MCF 10A (cell line): ENCODE measurements at regions of chr17 and their contacts with region 1.

Region 1: GRCh38 chr17:67280279-67280678 is 35.3 kb upstream of the HELZ start:
- DNase-seq: peak; percentile 96
- H3K4me3 Mint-ChIP-seq: no peak overlapping the region
- H3K27ac Mint-ChIP-seq: peak overlapping the region; percentile 65
- H3K4me1 Mint-ChIP-seq: peaks cover 18% of the 10 kb centered on the region
- H3K27me3 Mint-ChIP-seq: no peaks in the 10 kb centered on the region
- CTCF ChIP-seq: no peak

Region 2: GRCh38 chr17:67221062-67221998 is 58.9 kb before region 1 on chr17:
- CTCF ChIA-PET with region 1: interaction called, 4 read pairs
- POLR2A ChIA-PET with region 1: interaction called, 20 read pairs
- intact Hi-C with region 1: no loop called
- DNase-seq: peak; percentile 65
- H3K4me3 Mint-ChIP-seq: no peak overlapping the region
- H3K27ac Mint-ChIP-seq: no peak overlapping the region
- H3K4me1 Mint-ChIP-seq: peaks cover 33% of the 10 kb centered on the region
- H3K27me3 Mint-ChIP-seq: no peaks in the 10 kb centered on the region
- CTCF ChIP-seq: peak; percentile 47

Region 3: GRCh38 chr17:67239597-67239996 is 40.7 kb before region 1 on chr17:
- CTCF ChIA-PET with region 1: interaction called, 3 read pairs
- POLR2A ChIA-PET with region 1: interaction called, 62 read pairs
- intact Hi-C with region 1: no loop called
- DNase-seq: peak; percentile 25
- H3K4me3 Mint-ChIP-seq: peak overlapping the region; percentile 47
- H3K27ac Mint-ChIP-seq: peak overlapping the region; percentile 31
- H3K4me1 Mint-ChIP-seq: peaks cover 48% of the 10 kb centered on the region
- H3K27me3 Mint-ChIP-seq: no peaks in the 10 kb centered on the region
- CTCF ChIP-seq: no peak

Region 4: DNA sequence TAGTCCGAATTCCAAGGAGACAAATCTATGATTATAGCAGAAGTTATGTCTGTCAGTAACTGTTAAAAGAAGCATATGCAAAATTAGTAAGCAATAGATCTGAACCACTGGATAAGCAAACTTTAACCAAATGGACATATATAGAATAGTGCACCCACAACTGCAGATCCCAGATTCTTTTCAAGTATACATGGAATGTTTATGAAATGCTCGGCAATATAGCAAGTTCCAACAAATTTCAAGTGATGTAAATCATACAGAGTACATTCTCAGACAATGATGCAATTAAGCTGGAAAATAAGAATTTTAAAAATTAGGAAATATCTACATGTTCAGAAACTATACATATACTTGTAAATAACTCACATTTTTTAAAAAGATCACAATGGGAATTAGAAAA is 26.9 kb before region 1 on chr17:
- CTCF ChIA-PET with region 1: interaction called, 4 read pairs
- POLR2A ChIA-PET with region 1: interaction called, 68 read pairs
- intact Hi-C with region 1: no loop called
- DNase-seq: peak; percentile 43
- H3K4me3 Mint-ChIP-seq: no peak overlapping the region
- H3K27ac Mint-ChIP-seq: peak overlapping the region; percentile 79
- H3K4me1 Mint-ChIP-seq: peaks cover 15% of the 10 kb centered on the region
- H3K27me3 Mint-ChIP-seq: no peaks in the 10 kb centered on the region
- CTCF ChIP-seq: no peak

Region 5: DNA sequence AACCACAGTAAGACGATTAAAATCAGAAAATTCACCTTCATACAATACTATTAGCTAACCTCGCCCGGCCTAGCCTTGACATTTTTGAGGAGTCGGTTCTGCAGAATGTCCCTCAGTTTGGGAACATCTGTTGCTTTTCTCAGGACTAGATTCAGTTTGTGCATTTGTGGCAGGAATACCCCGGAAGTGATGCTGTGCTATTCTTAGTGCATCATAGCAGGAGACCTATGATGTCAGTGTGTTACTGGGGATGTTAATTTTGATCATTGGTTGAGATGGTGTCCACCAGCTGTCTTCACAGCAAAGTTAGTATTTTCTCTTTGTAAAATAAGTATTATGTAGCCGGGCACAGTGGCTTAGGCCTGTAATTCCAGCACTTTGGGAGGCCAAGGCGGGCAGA is 13.8 kb before region 1 on chr17:
- CTCF ChIA-PET with region 1: interaction called, 4 read pairs
- POLR2A ChIA-PET with region 1: interaction called, 37 read pairs
- intact Hi-C with region 1: no loop called
- DNase-seq: no peak
- H3K4me3 Mint-ChIP-seq: no peak overlapping the region
- H3K27ac Mint-ChIP-seq: no peak overlapping the region
- H3K4me1 Mint-ChIP-seq: peaks cover 6% of the 10 kb centered on the region
- H3K27me3 Mint-ChIP-seq: no peaks in the 10 kb centered on the region
- CTCF ChIP-seq: no peak